AG04449 (cell line): ENCODE measurements at regions of chr14 and their contacts with region 1.

Region 1: DNA sequence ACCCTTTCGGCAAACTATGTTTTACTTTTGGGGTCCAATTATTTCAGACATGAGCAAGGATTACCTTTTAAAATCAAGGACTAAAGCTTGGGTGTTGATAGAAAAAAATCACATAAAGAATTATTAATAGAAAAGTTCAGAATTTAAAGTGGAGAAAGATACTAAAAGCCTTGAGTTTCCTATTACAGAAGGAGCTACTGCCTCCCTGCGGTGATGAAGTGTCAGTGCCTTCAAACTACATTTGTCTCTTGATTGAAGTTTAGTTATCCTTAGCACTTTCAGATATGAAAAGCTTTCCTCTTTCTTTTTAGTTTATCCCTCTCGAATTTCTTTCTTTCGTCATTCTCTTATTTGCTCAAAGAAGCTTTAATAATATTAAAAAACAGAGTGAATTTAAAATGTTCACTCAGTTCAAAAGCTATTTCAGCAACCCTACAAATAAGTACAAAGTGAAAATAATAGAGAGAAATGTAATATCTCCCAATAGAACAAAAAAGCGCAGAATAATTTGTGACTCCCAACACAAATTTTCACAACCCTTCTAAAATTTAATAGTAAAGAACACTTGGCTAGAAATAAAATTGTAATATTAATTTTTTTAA is 87.6 kb downstream of the SEC23A start:
- DNase-seq: no peak
- H3K4me3 ChIP-seq: no peak overlapping the region
- CTCF ChIP-seq: peak; percentile 72

Region 2: GRCh38 chr14:38721822-38722431 is 293.5 kb before region 1 on chr14:
- CTCF ChIA-PET with region 1: interaction called, 96 read pairs
- POLR2A ChIA-PET with region 1: no interaction called
- DNase-seq: no peak
- H3K4me3 ChIP-seq: no peak overlapping the region
- CTCF ChIP-seq: peak; percentile 72

Region 3: DNA sequence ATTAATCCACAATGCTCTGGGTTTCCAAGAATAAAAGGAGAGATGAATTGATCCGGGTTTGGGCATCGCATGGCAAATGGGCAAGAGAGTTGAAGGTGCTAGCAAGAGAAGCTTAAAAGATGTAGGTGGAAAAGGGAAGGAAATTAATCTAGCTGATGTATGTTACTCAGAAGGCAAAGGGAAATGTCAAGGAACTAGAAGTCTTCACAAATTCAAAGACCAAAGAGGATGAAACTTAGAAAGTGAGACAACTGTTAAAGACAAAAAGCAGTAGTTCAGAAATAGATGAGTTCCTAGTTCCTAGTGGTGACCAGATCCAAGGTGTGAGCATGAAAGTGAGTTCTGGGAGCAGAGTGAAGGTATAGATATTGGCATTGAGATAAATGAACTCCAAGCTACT is 140.7 kb before region 1 on chr14:
- CTCF ChIA-PET with region 1: interaction called, 63 read pairs
- POLR2A ChIA-PET with region 1: no interaction called
- DNase-seq: no peak
- H3K4me3 ChIP-seq: no peak overlapping the region
- CTCF ChIP-seq: no peak

Region 4: GRCh38 chr14:38971255-38971921 is 44.1 kb before region 1 on chr14:
- CTCF ChIA-PET with region 1: no interaction called
- POLR2A ChIA-PET with region 1: no interaction called
- DNase-seq: no peak
- H3K4me3 ChIP-seq: no peak overlapping the region
- CTCF ChIP-seq: no peak

Region 5: DNA sequence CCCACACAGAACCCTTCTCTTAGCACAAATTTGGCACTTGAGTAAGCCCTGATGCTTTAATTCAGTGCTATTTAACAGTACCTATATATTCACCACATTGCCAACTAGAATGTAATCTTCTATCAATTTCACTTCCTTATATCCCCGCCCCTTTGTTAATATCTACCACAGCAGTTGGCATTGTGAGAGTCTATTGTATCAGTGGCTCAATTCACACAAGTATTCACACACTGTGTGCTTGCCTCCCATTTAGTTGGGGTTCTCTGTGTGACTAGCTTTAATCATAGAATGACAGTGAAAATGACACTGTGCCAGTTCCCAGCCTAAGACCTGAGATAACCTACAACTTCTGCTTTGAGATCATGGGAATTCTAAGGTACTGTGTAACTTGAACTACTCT is 15.5 kb before region 1 on chr14:
- CTCF ChIA-PET with region 1: interaction called, 18 read pairs
- POLR2A ChIA-PET with region 1: no interaction called
- DNase-seq: no peak
- H3K4me3 ChIP-seq: no peak overlapping the region
- CTCF ChIP-seq: no peak

Region 6: GRCh38 chr14:39025810-39026627 is 10.6 kb after region 1 on chr14:
- CTCF ChIA-PET with region 1: interaction called, 17 read pairs
- POLR2A ChIA-PET with region 1: no interaction called
- DNase-seq: no peak
- H3K4me3 ChIP-seq: no peak overlapping the region
- CTCF ChIP-seq: no peak

Region 7: GRCh38 chr14:39034481-39035296 is 19.2 kb after region 1 on chr14:
- CTCF ChIA-PET with region 1: interaction called, 17 read pairs
- POLR2A ChIA-PET with region 1: no interaction called
- DNase-seq: no peak
- H3K4me3 ChIP-seq: no peak overlapping the region
- CTCF ChIP-seq: peak; percentile 18

Region 8: DNA sequence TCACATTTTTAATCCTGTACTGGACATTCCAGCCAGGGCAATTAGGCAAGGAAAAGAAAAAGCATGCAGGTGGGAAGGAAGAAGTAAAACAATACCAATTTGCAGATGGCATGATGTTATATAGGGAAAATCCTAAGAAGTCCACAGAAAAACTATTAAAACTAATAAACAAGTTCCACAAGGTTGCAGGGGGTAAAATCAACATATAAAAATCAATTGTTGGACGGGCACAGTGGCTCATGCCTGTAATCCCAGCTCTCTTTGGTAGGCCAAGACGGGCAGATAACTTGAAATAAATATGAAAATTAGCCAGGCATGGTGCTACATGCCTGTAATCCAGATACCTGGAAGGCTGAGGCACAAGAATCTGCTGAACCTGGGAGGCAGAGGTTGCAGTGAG is 55.6 kb after region 1 on chr14:
- CTCF ChIA-PET with region 1: no interaction called
- POLR2A ChIA-PET with region 1: no interaction called
- DNase-seq: no peak
- H3K4me3 ChIP-seq: no peak overlapping the region
- CTCF ChIP-seq: no peak

Region 9: DNA sequence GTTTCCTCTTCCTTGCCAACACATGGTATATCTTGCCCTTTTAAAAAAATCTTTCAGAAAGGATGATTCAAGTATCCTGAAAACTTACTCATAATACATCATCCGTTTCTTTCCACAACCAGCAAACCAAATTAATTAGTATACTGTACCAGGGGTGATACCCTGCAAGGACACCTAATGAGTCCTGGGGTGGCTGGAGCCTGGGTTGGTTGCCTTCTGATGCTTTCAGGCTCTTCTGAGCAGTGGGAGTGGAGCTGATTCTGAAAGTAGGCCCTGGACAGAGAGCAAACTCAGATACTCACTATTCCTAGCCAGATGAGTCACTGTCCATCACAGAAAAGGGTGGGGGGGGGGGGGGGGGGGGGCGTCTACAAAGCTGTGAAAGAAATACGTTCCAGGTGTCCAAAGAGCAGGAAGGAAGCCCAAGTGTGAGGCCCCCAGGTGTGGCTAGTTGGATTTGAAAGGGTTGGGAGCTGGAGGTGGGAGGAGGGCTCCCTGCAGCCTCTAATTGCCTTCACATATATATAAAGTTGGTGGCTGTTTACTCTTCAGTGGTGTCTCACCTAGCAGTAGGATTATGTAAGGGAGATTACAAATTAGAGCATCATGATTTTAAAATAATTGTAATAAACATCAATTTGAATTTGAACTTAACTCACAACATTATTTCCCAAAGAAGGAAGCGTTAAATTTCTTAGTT is 380.2 kb after region 1 on chr14:
- CTCF ChIA-PET with region 1: no interaction called
- POLR2A ChIA-PET with region 1: no interaction called
- DNase-seq: no peak
- H3K4me3 ChIP-seq: no peak overlapping the region
- CTCF ChIP-seq: no peak

Region 10: DNA sequence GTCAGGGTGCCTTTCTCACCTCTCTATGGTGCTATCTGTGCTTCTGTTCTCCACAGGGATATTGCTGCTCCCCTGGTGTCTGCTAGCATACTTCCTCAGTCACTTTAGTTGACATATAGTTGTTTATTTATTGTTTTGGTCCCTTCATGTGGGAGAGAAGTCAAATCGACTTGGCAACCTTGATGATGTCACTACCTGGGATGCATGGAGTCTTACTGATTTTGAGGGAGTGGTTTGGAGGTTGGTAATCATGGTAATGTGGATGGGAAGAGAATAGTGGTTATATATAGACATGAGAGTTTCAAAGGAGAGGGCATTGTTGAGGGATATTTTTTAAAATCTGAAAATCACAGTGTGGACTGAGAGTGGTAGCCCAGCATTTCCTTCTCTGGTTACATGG is 490.4 kb after region 1 on chr14:
- CTCF ChIA-PET with region 1: no interaction called
- POLR2A ChIA-PET with region 1: no interaction called
- DNase-seq: no peak
- H3K4me3 ChIP-seq: no peak overlapping the region
- CTCF ChIP-seq: no peak